ENCODE measurements at regions of chr21 and their contacts with region 1.

Region 1: DNA sequence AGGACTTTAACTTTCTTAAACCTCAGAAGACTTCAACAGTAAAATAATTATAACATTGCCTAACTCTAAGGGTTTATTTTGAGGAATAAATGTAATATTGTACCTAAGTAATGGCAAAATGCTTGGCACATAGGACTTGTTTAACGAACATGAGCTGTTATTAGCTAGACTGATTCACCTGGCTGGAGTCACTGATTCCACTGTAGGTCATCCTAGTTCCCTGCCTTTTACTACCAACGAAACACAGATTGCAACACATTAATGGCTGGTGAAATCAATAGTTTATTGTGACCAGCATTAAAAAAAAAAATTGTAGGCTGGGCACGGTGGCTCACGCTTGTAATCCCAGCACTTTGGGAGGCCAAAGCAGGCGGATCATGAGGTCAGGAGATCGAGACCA is 45.5 kb upstream of the ATP5PO start:
- DNase-seq: no peak
- ATAC-seq: no peak
- H3K4me3 ChIP-seq: no peak overlapping the region
- H3K4me3 Mint-ChIP-seq: no peak overlapping the region
- H3K27ac ChIP-seq: no peak overlapping the region
- H3K27ac Mint-ChIP-seq: peak overlapping the region in 1 of 9 donors; percentile 10
- H3K4me1 ChIP-seq: no peaks in the 10 kb centered on the region
- H3K4me1 Mint-ChIP-seq: peaks cover 16 to 47% (median 40%) of the 10 kb centered on the region in 7 donors
- H3K27me3 ChIP-seq: no peaks in the 10 kb centered on the region
- H3K27me3 Mint-ChIP-seq: no peaks in the 10 kb centered on the region

Region 2: DNA sequence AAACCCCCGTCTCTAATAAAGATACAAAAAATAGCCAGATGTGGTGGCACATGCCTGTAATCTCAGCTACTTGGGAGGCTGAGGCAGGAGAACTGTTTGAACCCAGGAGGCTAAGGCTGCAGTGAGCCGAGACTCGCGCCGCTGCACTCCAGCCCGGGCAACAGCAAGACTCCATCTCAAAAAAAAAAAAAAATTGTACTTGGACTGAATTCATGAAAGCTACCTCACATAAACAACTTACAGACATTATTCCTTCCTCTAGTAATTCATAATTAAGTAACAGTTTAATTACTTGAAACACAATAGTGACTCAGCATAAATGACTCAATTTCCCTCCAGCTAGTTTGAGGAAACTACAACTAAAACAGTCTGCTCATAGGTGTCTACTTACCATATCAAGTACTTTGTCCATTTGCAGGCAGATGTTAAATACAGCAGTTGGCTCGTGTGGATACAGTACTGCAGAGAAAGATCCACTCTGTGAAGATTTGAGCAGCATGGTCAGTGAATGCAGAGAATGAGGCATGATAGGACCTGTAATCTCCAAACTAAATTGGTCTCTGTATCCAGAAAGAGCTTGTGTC is 382.0 kb before region 1 on chr21:
- CTCF ChIA-PET with region 1: no interaction called
- POLR2A ChIA-PET with region 1: no interaction called
- intact Hi-C with region 1: no loop called
- DNase-seq: no peak
- ATAC-seq: no peak
- H3K4me3 ChIP-seq: no peak overlapping the region
- H3K4me3 Mint-ChIP-seq: no peak overlapping the region
- H3K27ac ChIP-seq: no peak overlapping the region
- H3K27ac Mint-ChIP-seq: peak overlapping the region in 5 of 9 donors; percentile 33 to 59 (median 45)
- H3K4me1 ChIP-seq: no peaks in the 10 kb centered on the region
- H3K4me1 Mint-ChIP-seq: peaks cover 0 to 11% (median under 1%) of the 10 kb centered on the region in 7 donors
- H3K27me3 ChIP-seq: no peaks in the 10 kb centered on the region
- H3K27me3 Mint-ChIP-seq: no peaks in the 10 kb centered on the region

Region 3: GRCh38 chr21:33817663-33818451 is 143.2 kb before region 1 on chr21:
- CTCF ChIA-PET with region 1: no interaction called
- POLR2A ChIA-PET with region 1: no interaction called
- intact Hi-C with region 1: no loop called
- DNase-seq: no peak
- ATAC-seq: no peak
- H3K4me3 ChIP-seq: no peak overlapping the region
- H3K4me3 Mint-ChIP-seq: no peak overlapping the region
- H3K27ac ChIP-seq: no peak overlapping the region
- H3K27ac Mint-ChIP-seq: no peak overlapping the region
- H3K4me1 ChIP-seq: no peaks in the 10 kb centered on the region
- H3K4me1 Mint-ChIP-seq: peaks cover 0 to 8% (median 0%) of the 10 kb centered on the region in 7 donors
- H3K27me3 ChIP-seq: no peaks in the 10 kb centered on the region
- H3K27me3 Mint-ChIP-seq: peaks cover 0 to 6% (median 0%) of the 10 kb centered on the region in 5 donors

Region 4: GRCh38 chr21:33908760-33909159 is 52.3 kb before region 1 on chr21:
- CTCF ChIA-PET with region 1: no interaction called
- POLR2A ChIA-PET with region 1: no interaction called
- intact Hi-C with region 1: no loop called
- DNase-seq: no peak
- ATAC-seq: no peak
- H3K4me3 ChIP-seq: no peak overlapping the region
- H3K4me3 Mint-ChIP-seq: no peak overlapping the region
- H3K27ac ChIP-seq: no peak overlapping the region
- H3K27ac Mint-ChIP-seq: no peak overlapping the region
- H3K4me1 ChIP-seq: no peaks in the 10 kb centered on the region
- H3K4me1 Mint-ChIP-seq: peaks cover 4 to 22% (median 16%) of the 10 kb centered on the region in 7 donors
- H3K27me3 ChIP-seq: no peaks in the 10 kb centered on the region
- H3K27me3 Mint-ChIP-seq: no peaks in the 10 kb centered on the region

Region 5: GRCh38 chr21:33993286-33994231 is 32.5 kb after region 1 on chr21:
- CTCF ChIA-PET with region 1: no interaction called
- POLR2A ChIA-PET with region 1: no interaction called
- intact Hi-C with region 1: loop called in 1 of 2 experiments (anchors 1 kb)
- DNase-seq: no peak
- ATAC-seq: peak; percentile 81
- H3K4me3 ChIP-seq: no peak overlapping the region
- H3K4me3 Mint-ChIP-seq: no peak overlapping the region
- H3K27ac ChIP-seq: no peak overlapping the region
- H3K27ac Mint-ChIP-seq: peak overlapping the region in 4 of 9 donors; percentile 6 to 51 (median 35)
- H3K4me1 ChIP-seq: peaks cover 6% of the 10 kb centered on the region in 2 donors
- H3K4me1 Mint-ChIP-seq: peaks cover 14 to 29% (median 17%) of the 10 kb centered on the region in 7 donors
- H3K27me3 ChIP-seq: no peaks in the 10 kb centered on the region
- H3K27me3 Mint-ChIP-seq: peaks cover 0 to 4% (median 0%) of the 10 kb centered on the region in 5 donors

Region 6: GRCh38 chr21:34336756-34337391 is 375.8 kb after region 1 on chr21:
- CTCF ChIA-PET with region 1: no interaction called
- POLR2A ChIA-PET with region 1: no interaction called
- intact Hi-C with region 1: no loop called
- DNase-seq: no peak
- ATAC-seq: no peak
- H3K4me3 ChIP-seq: no peak overlapping the region
- H3K4me3 Mint-ChIP-seq: no peak overlapping the region
- H3K27ac ChIP-seq: no peak overlapping the region
- H3K27ac Mint-ChIP-seq: no peak overlapping the region
- H3K4me1 ChIP-seq: no peaks in the 10 kb centered on the region
- H3K4me1 Mint-ChIP-seq: peaks cover 0 to 9% (median 0%) of the 10 kb centered on the region in 7 donors
- H3K27me3 ChIP-seq: no peaks in the 10 kb centered on the region
- H3K27me3 Mint-ChIP-seq: peaks cover 0 to 5% (median 0%) of the 10 kb centered on the region in 5 donors